ENCODE measurements at regions of chr6 and their contacts with region 1.

Region 1: DNA sequence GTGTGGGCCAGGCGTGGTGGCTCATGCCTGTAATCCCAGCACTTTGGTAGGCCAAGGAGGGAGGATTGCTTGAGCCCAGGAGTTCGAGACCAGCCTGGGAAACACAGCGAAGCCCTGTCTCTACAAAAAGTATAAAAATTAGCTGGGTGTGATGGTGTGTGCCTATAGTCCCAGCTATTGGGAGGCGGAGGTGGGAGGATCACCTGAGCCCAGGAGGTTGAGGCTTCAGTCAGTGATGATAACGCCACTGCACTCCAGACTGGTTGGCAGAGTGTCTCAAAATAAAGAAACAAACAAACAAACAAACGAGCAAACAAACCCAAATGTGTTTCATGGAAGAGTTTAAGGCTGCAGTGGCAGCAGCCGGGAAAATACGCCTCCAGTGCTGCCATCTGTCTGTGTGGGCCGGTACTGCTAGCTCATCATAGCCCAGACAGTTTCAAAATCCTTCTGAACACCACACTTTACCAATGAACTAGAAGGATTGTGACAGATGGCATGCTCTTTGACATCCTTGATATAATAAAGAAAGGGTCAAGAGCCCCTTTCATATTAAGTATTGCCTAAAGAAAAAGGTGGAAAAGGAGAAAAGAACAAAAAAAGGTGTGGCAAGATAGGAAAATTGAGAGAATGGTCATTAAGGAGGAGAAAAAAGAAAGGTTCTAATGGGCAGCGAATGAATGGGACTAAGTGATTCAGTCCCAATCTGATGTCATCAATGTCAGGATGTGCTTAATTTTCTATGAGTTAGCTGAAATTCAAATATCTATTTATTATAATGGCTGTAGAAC is 298.6 kb downstream of the SYNE1 start:
- DNase-seq: peak; percentile 22 to 55 (median 40)
- H3K4me3 ChIP-seq: no peak overlapping the region
- H3K27ac ChIP-seq: no peak overlapping the region
- H3K4me1 ChIP-seq: no peaks in the 10 kb centered on the region
- H3K27me3 ChIP-seq: no peaks in the 10 kb centered on the region

Region 2: DNA sequence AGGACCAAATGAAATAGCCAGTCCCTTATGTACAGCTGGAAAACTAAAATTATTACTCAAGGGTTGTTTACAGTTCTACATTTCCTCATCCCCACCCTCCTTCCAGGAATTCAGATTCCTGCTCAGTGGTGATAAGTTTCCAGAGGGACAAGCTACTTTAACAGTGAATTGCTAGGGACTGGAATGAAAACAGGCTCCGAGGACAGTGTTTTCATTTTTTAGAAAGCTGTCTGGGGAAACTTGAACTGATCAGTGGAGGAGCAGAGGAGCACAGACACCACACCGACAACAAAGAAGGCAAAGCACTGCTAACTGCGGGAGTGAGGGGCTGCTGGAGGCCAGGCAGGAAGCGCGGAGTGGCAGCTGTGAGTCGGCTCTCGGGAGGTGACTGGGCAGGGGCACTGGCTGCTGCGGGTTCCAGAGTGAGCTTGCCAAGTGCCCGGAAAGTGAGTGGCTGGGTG is 208.8 kb before region 1 on chr6:
- CTCF ChIA-PET with region 1: no interaction called
- POLR2A ChIA-PET with region 1: no interaction called
- DNase-seq: no peak
- H3K4me3 ChIP-seq: no peak overlapping the region
- H3K27ac ChIP-seq: no peak overlapping the region
- H3K4me1 ChIP-seq: peaks cover 0 to 3% (median 0%) of the 10 kb centered on the region in 4 experiments
- H3K27me3 ChIP-seq: no peaks in the 10 kb centered on the region

Region 3: DNA sequence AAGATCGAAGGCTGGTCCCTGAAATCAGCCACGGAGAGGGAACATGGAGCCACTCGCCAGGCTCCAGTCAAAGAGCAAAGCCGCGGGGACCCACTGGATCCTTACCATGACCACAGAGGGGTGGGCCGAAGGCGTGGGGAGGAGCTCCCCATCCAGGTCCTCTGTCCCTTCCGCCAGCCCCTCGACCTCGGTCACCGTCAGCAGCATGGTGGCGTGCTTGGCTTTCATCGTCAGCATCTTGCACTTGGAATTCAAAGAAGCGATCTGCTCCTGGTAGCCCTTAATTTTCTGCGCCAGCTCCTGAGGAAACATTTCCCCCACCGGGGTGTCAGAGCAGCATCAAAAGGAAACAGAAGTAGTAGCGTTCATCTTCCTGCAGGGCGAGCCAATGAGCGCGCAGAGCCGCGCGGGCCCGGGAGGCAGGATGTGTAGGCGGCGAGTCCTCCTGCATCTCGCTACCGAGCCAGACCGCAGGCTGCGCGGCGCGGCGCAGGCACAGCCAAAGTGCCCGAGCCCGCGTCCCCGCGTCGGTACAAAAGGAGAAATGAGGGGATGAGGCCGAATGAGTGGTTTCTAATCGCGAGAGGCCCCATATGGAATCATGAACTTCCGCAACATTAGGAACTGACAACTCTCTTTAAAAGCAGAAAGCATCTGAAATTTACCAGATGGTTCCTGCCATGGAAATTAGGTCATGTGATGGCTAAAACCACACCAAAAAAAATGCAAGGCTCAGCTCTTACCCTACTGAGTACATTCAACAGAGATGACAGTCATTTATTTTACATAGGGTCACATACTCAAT is 36.6 kb before region 1 on chr6:
- CTCF ChIA-PET with region 1: interaction called, 31 read pairs
- POLR2A ChIA-PET with region 1: no interaction called
- DNase-seq: peak; percentile 95 to 99 (median 97)
- H3K4me3 ChIP-seq: peak overlapping the region; percentile 79 to 97 (median 88)
- H3K27ac ChIP-seq: peak overlapping the region; percentile 73 to 85
- H3K4me1 ChIP-seq: peaks cover 13 to 34% (median 19%) of the 10 kb centered on the region in 4 experiments
- H3K27me3 ChIP-seq: no peaks in the 10 kb centered on the region

Region 4: GRCh38 chr6:152316024-152316423 is 22.5 kb before region 1 on chr6:
- CTCF ChIA-PET with region 1: interaction called, 23 read pairs
- POLR2A ChIA-PET with region 1: no interaction called
- DNase-seq: no peak
- H3K4me3 ChIP-seq: no peak overlapping the region
- H3K27ac ChIP-seq: no peak overlapping the region
- H3K4me1 ChIP-seq: no peaks in the 10 kb centered on the region
- H3K27me3 ChIP-seq: no peaks in the 10 kb centered on the region

Region 5: DNA sequence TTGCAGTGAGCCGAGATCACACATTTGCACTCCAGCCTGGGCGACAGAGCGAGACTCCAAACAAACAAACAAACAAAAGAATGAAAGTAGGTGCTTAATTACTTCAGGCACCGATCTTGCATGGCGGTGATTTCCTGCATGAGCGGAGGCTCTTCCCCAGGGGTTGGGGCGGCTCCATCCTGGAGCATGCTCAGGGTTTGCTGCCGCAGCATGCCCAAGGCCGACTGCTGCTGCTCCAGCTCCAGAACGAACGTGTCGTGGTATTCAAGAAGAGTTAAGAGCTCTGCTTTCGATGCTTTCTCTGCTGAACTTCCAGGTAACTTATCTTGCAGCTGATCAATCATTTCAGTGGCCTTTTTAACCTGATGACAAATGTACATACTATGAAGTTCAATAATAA is 15.2 kb before region 1 on chr6:
- CTCF ChIA-PET with region 1: interaction called, 23 read pairs
- POLR2A ChIA-PET with region 1: no interaction called
- DNase-seq: no peak
- H3K4me3 ChIP-seq: no peak overlapping the region
- H3K27ac ChIP-seq: no peak overlapping the region
- H3K4me1 ChIP-seq: no peaks in the 10 kb centered on the region
- H3K27me3 ChIP-seq: no peaks in the 10 kb centered on the region

Region 6: DNA sequence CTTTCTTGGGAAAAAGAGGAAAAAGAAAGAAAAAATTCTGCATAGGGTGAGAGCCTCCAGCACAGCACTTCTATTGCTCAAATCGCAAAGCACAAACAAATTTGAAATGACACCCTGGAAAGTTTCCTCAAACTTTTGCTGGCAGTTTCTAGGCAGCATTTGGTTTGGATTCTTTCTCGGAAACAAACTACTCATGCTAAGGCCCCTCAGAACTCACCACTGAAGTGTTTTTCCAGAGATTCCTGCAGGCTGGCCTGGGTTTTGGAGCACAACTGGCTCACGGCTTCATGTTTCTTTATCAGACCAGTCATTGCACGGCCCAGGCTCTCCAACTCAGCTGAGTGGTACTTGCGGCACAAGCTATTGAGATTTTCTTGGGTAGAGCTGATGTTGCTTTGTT is 60.9 kb after region 1 on chr6:
- CTCF ChIA-PET with region 1: no interaction called
- POLR2A ChIA-PET with region 1: no interaction called
- DNase-seq: no peak
- H3K4me3 ChIP-seq: no peak overlapping the region
- H3K27ac ChIP-seq: no peak overlapping the region
- H3K4me1 ChIP-seq: no peaks in the 10 kb centered on the region
- H3K27me3 ChIP-seq: no peaks in the 10 kb centered on the region